ENCODE measurements at regions of chr14 and their contacts with region 1.

Region 1: GRCh38 chr14:64035143-64035542 is 182.3 kb downstream of the SYNE2 start:
- DNase-seq: no peak
- H3K4me3 ChIP-seq: no peak overlapping the region
- H3K27ac ChIP-seq: peak overlapping the region in 1 of 4 donors; percentile 50
- H3K4me1 ChIP-seq: peaks cover 0 to 36% (median 23%) of the 10 kb centered on the region in 4 donors
- H3K27me3 ChIP-seq: no peaks in the 10 kb centered on the region
- CTCF ChIP-seq: no peak
- EP300 ChIP-seq: no peak
- POLR2A ChIP-seq: no peak

Region 2: DNA sequence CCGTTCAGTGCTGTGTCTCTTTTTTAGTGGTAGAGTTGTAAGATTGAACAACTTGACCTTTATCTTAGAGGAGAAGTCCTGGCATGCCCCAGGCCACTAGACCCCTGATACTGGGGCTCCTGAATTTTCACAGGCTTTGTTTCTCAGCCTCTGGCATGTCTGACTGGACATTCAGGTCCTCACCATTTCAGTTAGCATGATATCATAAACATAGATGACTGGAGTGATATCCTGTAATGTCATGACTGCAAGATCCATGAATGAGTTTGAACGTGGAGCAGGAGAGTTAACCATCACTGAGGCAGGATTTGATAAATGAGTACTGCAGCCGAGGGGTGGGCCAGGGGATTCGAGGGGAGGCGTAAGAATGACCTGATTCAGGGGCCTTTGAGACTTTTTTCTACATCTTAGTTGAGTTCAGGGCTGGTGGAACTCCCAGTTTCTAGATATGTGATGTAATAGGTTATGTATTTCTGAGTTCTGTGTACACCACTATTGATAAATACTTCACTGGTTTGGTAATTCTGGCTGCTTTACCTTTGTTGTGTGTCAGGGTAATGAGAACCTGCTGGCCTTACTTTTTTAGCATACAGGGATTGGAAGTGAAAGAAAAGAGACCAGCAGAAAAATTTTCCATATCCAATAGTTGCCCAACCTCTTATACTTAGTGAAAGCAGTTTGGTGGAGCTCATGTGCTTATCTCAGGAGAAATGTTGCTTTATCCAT is 34.7 kb after region 1 on chr14:
- intact Hi-C with region 1: no loop called
- DNase-seq: no peak
- H3K4me3 ChIP-seq: no peak overlapping the region
- H3K27ac ChIP-seq: peak overlapping the region in 2 of 4 donors; percentile 49 to 65
- H3K4me1 ChIP-seq: peaks cover 0 to 3% (median 0%) of the 10 kb centered on the region in 4 donors
- H3K27me3 ChIP-seq: no peaks in the 10 kb centered on the region
- CTCF ChIP-seq: no peak
- EP300 ChIP-seq: no peak
- POLR2A ChIP-seq: no peak

Region 3: DNA sequence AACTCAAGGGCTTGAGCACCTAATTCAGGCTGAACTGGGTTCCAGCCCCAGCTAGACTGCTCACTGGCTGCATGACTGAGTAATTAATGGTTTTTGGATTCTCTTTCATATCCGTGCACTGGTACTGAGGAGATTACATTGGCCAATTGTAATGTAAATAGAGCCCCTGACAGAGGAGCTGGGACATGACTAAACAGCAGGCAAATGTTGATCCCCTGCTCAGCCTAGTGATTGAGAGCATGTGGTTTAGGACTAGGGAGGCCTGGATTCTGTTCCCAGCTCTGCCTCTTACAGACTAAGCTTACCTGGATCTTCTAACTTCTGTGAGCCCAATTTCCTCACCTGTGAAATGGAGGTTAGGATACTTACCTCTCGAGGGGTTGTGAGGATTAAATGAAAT is 54.8 kb after region 1 on chr14:
- intact Hi-C with region 1: loop called (anchors 10 kb)
- DNase-seq: no peak
- H3K4me3 ChIP-seq: no peak overlapping the region
- H3K27ac ChIP-seq: no peak overlapping the region
- H3K4me1 ChIP-seq: peaks cover 0 to 4% (median 0%) of the 10 kb centered on the region in 4 donors
- H3K27me3 ChIP-seq: no peaks in the 10 kb centered on the region
- CTCF ChIP-seq: no peak
- EP300 ChIP-seq: no peak
- POLR2A ChIP-seq: no peak

Measured in esophagus muscularis mucosa (tissue), 4 donors.